HCT116 (cell line): ENCODE measurements at regions of chr2 and their contacts with region 1.

Region 1: DNA sequence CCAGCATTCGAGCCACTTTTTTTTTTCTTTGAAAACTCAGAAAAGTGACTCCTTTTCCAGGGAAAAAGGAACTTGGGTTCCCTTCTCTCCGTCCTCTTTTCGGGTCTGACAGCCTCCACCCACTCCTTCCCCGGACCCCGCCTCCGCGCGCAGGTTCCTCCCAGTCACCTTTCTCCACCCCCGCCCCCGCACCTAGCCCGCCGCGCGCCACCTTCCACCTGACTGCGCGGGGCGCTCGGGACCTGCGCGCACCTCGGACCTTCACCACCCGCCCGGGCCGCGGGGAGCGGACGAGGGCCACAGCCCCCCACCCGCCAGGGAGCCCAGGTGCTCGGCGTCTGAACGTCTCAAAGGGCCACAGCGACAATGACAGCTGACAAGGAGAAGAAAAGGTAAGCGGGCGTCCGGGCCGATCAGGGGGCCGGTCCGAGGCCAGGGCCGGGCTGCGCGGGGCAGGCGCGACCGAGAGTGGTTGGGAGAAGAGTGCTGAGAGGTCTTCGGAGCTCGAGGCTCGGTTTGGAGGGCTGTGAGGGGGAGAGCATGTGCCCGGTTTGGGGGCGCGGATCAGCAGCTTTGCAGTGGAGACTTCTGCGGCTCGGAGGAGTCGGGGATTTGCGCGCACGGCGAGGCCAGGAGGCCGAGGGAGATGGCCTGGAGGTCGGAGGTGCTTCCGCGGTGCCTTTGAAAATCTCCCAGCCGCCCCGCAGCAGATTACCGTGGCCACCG is 502 bp downstream of the EPAS1 start:
- DNase-seq: no peak
- ATAC-seq: peak; percentile 76
- H3K4me3 ChIP-seq: peak overlapping the region; percentile 75 to 91
- H3K27ac ChIP-seq: peak overlapping the region; percentile 74
- H3K4me1 ChIP-seq: peaks cover 12 to 39% of the 10 kb centered on the region in 2 experiments; a peak in 3 of 4 replicates
- H3K27me3 ChIP-seq: no peaks in the 10 kb centered on the region
- CTCF ChIP-seq: no peak
- POLR2A ChIP-seq: peak; percentile 19
- RAD21 ChIP-seq: peak; percentile 55

Region 2: DNA sequence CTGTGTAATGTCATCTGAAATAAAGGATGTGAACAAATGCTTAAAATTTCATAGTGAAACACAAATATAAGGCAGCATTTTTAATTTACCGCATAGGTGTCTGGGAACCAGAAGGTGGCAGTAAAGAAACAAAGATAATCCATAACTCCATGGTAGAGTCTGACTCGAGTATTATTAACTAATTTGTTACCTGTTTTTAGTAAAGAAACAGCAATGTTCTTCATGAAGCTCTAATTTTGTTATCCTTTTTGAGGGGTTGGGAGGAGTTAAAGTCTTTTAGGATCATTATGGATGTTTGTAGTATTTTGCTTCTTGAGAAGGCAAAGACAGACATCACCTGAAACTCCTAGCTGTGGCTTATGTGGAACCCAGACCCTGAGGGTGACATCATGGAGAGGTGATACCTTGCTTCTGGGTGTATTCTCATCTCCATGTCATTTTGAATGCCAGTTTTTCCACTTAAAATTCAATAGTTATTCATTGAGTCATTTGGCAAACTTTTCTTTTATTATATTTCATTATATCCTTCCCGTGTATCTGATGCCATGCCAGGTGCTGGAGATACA is 286.7 kb before region 1 on chr2:
- CTCF ChIA-PET with region 1: interaction called, 3 read pairs
- POLR2A ChIA-PET with region 1: no interaction called
- RAD21 ChIA-PET with region 1: no interaction called
- intact Hi-C with region 1: loop called (anchors 1 kb)
- DNase-seq: peak; percentile 19
- ATAC-seq: peak; percentile 76
- H3K4me3 ChIP-seq: no peak overlapping the region
- H3K27ac ChIP-seq: no peak overlapping the region
- H3K4me1 ChIP-seq: peaks cover 0 to 8% of the 10 kb centered on the region in 2 experiments; a peak in 1 of 4 replicates
- H3K27me3 ChIP-seq: no peaks in the 10 kb centered on the region
- CTCF ChIP-seq: peak; percentile 56 to 82 (median 72)
- POLR2A ChIP-seq: no peak
- RAD21 ChIP-seq: peak; percentile 84

Region 3: DNA sequence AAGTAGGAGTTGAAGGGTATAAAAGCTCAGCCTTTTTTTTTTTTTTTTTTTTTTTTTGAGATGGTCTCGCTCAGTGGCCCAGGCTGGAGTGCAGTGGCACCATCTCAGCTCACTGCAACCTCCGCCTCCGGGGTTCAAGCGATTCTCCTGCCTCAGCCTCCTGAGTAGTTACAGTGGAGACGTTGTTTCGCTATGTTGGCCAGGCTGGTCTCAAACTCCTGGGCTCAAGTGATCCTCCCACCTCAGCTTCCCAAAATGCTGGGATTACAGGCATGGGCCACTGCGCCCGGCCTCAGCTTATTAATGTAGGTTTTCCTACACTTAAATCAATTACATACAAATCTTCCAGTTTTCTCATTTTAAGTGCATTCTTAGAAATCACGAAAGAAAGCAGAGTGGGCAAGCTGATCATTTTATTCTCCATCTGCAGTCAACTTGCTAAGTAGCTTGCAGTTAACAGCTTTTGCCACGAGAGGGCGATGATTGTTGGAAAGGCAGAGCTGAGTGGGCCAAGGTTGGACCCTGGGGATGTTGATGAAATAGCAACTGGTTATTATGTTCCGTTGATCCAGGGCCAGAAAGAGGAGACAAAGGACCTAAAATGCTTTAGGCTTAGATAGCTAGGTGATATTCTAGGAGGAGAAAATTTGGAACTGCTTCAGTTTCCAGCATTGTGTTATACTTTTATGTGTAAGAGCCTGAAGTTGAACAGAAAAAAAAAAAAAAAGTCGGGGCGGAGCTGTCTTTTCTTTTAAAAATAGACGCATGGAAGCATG is 234.9 kb before region 1 on chr2:
- CTCF ChIA-PET with region 1: interaction called, 16 read pairs
- POLR2A ChIA-PET with region 1: no interaction called
- RAD21 ChIA-PET with region 1: interaction called in 1 of 2 experiments, 3 read pairs
- intact Hi-C with region 1: loop called (anchors 1 kb)
- DNase-seq: peak; percentile 54
- ATAC-seq: peak; percentile 85
- H3K4me3 ChIP-seq: no peak overlapping the region
- H3K27ac ChIP-seq: no peak overlapping the region
- H3K4me1 ChIP-seq: no peaks in the 10 kb centered on the region
- H3K27me3 ChIP-seq: no peaks in the 10 kb centered on the region
- CTCF ChIP-seq: peak; percentile 74 to 91 (median 80)
- POLR2A ChIP-seq: no peak
- RAD21 ChIP-seq: peak; percentile 83

Region 4: GRCh38 chr2:46157072-46157965 is 140.4 kb before region 1 on chr2:
- CTCF ChIA-PET with region 1: no interaction called
- POLR2A ChIA-PET with region 1: no interaction called
- RAD21 ChIA-PET with region 1: no interaction called
- intact Hi-C with region 1: no loop called
- DNase-seq: no peak
- ATAC-seq: no peak
- H3K4me3 ChIP-seq: no peak overlapping the region
- H3K27ac ChIP-seq: no peak overlapping the region
- H3K4me1 ChIP-seq: no peaks in the 10 kb centered on the region
- H3K27me3 ChIP-seq: no peaks in the 10 kb centered on the region
- CTCF ChIP-seq: no peak
- POLR2A ChIP-seq: no peak
- RAD21 ChIP-seq: no peak